GM12878 (cell line): ENCODE measurements at regions of chr6 and their contacts with region 1.

Region 1: DNA sequence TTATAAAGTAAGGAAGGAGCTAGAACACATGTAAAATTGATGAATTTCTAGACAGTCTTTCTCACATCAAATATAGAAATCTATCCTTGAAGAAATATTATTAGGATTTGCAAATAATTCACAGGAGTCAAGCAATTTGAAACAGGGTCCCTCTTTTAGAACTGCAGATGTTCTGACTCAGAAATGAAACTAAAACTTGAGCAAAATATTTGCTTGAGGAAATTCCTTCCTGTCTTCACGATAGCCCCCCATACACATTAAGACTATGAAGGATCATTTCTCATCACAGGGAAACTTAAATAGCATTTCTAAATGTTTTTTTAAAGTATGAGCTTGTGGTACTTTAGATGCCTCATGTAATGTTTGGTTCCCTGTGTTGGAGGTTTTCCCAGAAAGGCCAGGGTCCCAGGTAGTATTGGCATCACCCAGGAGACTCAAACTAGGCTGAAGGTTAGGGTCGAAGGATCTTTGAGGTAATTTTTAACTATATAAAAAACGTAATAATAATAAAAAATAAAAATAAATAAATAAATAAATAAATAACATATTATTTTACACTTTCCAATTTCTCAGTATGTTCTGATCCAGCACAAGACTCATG is 144.0 kb upstream of the TBX18 start:
- DNase-seq: no peak
- ATAC-seq: no peak
- H3K4me3 ChIP-seq: no peak overlapping the region
- H3K27ac ChIP-seq: no peak overlapping the region
- H3K4me1 ChIP-seq: no peaks in the 10 kb centered on the region
- H3K27me3 ChIP-seq: no peaks in the 10 kb centered on the region
- CTCF ChIP-seq: no peak
- EP300 ChIP-seq: no peak
- POLR2A ChIP-seq: no peak
- RAD21 ChIP-seq: no peak

Region 2: GRCh38 chr6:84853901-84854300 is 54.5 kb before region 1 on chr6:
- CTCF ChIA-PET with region 1: no interaction called
- POLR2A ChIA-PET with region 1: no interaction called
- RAD21 ChIA-PET with region 1: no interaction called
- SMC1A ChIA-PET with region 1: no interaction called
- in situ Hi-C with region 1: no loop called
- intact Hi-C with region 1: no loop called
- DNase-seq: no peak
- ATAC-seq: no peak
- H3K4me3 ChIP-seq: no peak overlapping the region
- H3K27ac ChIP-seq: no peak overlapping the region
- H3K4me1 ChIP-seq: no peaks in the 10 kb centered on the region
- H3K27me3 ChIP-seq: no peaks in the 10 kb centered on the region
- CTCF ChIP-seq: no peak
- EP300 ChIP-seq: no peak
- POLR2A ChIP-seq: no peak
- RAD21 ChIP-seq: no peak

Region 3: DNA sequence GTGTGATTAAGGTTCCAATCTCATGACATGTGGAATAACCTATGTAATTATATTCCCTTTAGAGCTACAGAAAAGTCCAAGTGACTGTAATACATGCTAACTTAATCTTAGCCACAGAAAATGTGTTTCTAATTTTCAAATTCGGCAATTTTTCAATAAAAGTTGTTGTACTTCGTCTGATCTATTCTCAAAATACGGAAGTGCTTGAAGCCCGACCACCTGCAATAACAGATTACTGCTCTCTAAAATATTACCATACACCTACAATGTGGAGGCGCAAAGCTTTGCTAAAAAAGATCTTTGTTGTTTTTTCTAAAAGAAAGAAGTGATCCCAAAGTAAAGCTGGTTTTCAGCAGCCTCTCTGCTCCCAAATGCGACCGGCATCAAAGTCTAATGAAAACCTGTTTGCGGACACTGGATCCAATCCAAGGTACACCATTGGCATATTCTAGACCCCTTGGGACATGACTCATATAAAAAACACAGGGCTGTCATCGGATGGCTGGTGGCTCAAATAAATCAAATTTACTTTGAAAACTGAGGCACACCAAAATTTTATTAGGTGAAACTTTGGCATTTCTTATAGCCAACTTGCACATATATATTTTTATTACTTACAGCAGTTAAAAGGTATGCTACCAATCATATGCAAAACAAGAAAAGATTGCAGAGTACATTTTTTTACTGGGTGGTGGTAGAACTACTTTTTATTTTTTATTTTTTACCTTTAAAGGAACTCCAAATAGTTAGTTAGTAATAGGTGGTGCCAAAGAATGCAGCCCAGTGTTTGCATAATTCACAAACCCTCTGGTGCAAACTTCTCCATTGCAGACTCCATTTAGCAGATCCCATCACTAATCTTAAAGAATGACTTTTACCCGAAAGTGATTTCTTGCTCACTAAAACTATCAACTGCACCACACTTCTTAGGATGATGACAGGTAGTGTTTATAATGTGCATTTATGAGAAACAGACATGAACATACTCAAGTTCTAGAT is 25.3 kb before region 1 on chr6:
- CTCF ChIA-PET with region 1: no interaction called
- POLR2A ChIA-PET with region 1: no interaction called
- RAD21 ChIA-PET with region 1: no interaction called
- SMC1A ChIA-PET with region 1: no interaction called
- in situ Hi-C with region 1: no loop called
- intact Hi-C with region 1: loop called (anchors 1 kb)
- DNase-seq: no peak
- ATAC-seq: no peak
- H3K4me3 ChIP-seq: no peak overlapping the region
- H3K27ac ChIP-seq: no peak overlapping the region
- H3K4me1 ChIP-seq: no peaks in the 10 kb centered on the region
- H3K27me3 ChIP-seq: no peaks in the 10 kb centered on the region
- CTCF ChIP-seq: no peak
- EP300 ChIP-seq: no peak
- POLR2A ChIP-seq: no peak
- RAD21 ChIP-seq: no peak